Panc1 (cell line): ENCODE measurements at regions of chr10 and their contacts with region 1.

Region 1: DNA sequence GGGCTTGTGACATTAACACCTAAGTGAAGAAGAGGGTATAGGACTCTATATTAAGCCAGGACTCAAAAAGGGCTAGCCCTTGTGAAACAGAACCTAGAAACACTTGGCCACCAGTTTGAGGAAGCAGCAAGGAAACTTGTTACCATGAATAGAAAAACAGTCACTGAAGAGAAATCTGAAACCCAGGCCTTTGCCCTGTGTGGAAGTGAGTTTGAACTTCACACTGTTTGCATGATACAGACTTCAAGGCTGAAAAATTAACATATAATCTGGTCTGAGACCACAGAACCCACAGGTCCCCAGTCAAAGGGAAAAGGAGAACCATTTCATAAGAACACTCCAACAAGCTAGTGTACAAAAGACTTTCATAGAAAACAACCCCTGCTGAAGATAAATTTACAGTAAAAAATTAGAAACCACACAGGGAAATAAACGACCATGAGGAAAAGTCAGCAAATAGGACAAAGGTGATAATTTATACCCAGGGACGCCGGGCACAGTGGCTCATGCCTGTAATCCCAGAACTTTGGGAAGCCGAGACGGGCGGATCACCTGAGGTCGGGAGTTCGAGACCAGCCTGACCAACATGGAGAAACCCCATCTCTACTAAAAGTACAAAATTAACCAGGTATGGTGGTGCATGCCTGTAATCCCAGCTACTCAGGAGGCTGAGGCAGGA is 76.1 kb downstream of the SKIDA1 start:
- DNase-seq: no peak
- ATAC-seq: no peak
- H3K4me3 ChIP-seq: no peak overlapping the region
- H3K27ac ChIP-seq: peak overlapping the region; percentile 48; the same call in 1 of the 2 replicates
- H3K4me1 ChIP-seq: no peaks in the 10 kb centered on the region
- H3K27me3 ChIP-seq: no peaks in the 10 kb centered on the region
- CTCF ChIP-seq: no peak

Region 2: DNA sequence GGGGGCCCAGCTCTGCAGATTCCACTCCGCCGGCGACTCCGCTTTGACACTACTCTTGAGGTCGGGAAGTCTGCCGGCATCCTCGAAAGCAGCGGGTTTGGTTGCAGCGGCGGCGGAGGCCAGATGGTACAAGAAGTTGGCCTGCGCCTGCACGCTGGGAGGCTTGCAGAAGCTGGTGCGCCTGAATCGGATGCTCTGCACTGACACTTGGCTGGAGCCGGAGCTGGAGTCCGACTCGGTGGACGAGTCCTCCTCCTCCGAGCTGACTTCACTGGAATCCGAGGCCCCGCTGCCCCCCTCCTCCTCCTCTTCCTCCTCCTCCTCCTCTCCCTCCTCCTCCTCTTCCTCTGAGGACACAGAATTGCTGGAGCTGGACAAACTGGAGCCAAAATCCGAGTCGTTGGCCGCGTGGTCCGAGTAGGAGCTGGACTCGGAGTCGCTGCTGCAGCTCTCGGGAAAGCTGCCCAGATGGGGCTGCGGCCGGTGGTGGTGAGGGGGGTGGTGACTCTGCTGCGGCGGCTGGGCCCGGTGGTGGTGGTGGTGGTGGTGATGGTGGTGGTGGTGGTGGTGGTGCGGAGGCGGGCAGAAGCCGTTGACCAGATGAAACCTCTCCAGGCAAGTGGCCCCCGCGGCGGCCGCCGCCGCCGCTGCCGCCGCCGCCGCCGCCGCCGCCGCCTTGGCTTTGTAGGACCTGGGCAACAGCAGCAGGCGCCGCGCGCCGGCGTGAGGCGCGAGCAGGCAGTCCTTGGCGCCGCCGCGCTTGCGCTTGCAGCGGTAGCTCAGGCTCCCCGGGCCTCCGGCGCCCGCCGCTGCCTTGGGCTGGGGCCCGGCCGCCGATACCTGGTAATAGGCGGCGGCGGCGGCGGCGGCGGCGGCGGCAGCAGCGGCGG is 67.1 kb after region 1 on chr10:
- CTCF ChIA-PET with region 1: no interaction called
- POLR2A ChIA-PET with region 1: no interaction called
- in situ Hi-C with region 1: no loop called
- intact Hi-C with region 1: no loop called
- DNase-seq: no peak
- ATAC-seq: peak; percentile 47
- H3K4me3 ChIP-seq: peak overlapping the region; percentile 62
- H3K27ac ChIP-seq: peak overlapping the region; percentile 95
- H3K4me1 ChIP-seq: peaks cover 21% of the 10 kb centered on the region
- H3K27me3 ChIP-seq: no peaks in the 10 kb centered on the region
- CTCF ChIP-seq: no peak

Region 3: GRCh38 chr10:21584834-21585530 is 135.6 kb after region 1 on chr10:
- CTCF ChIA-PET with region 1: no interaction called
- POLR2A ChIA-PET with region 1: no interaction called
- in situ Hi-C with region 1: no loop called
- intact Hi-C with region 1: no loop called
- DNase-seq: no peak
- ATAC-seq: no peak
- H3K4me3 ChIP-seq: no peak overlapping the region
- H3K27ac ChIP-seq: no peak overlapping the region
- H3K4me1 ChIP-seq: no peaks in the 10 kb centered on the region
- H3K27me3 ChIP-seq: no peaks in the 10 kb centered on the region
- CTCF ChIP-seq: no peak

Region 4: DNA sequence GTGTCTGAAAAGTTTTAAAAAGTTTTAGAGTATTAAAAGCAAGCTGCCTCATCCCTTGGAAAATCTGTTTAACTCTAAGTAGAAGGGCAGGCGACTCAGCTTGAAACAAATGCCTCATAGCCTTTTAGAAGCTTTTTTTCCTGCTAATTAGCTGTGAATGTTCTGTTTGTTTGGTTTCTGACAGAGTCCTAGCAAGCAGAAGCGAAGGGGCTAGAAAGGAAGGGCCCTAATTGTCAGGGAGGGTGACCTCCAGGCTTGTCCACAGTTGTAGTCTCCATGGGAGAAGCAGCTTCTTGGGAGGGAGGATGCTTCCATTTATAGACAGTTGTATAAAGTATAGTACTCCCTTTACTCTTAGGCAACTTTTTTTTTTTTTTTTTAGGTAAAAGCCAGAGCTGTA is 463.2 kb after region 1 on chr10:
- CTCF ChIA-PET with region 1: no interaction called
- POLR2A ChIA-PET with region 1: interaction called, 11 read pairs
- in situ Hi-C with region 1: no loop called
- intact Hi-C with region 1: no loop called
- DNase-seq: no peak
- ATAC-seq: no peak
- H3K4me3 ChIP-seq: no peak overlapping the region
- H3K27ac ChIP-seq: no peak overlapping the region
- H3K4me1 ChIP-seq: no peaks in the 10 kb centered on the region
- H3K27me3 ChIP-seq: no peaks in the 10 kb centered on the region
- CTCF ChIP-seq: no peak